Activated CD4-positive, alpha-beta memory T cell treated with anti-CD3 and anti-CD28 coated beads for 36 hours (primary cell): ENCODE measurements at regions of chr12 and their contacts with region 1.

Region 1: GRCh38 chr12:49188914-49189367 is at the start of gene TUBA1A:
- DNase-seq: peak; percentile 97
- H3K4me3 Mint-ChIP-seq: peak within 1 kb of the TSS; percentile 90
- H3K27ac Mint-ChIP-seq: peak within 1 kb of the TSS; percentile 95
- H3K4me1 Mint-ChIP-seq: peaks cover 16% of the 10 kb centered on the region
- H3K27me3 Mint-ChIP-seq: no peaks in the 10 kb centered on the region
- total RNA-seq, gene TUBA1A: 86.4 to 88.7 TPM

Region 2: GRCh38 chr12:48826209-48826894 is 362.6 kb before region 1 on chr12:
- CTCF ChIA-PET with region 1: no interaction called
- POLR2A ChIA-PET with region 1: no interaction called
- intact Hi-C with region 1: no loop called
- DNase-seq: no peak
- H3K4me3 Mint-ChIP-seq: no peak overlapping the region
- H3K27ac Mint-ChIP-seq: no peak overlapping the region
- H3K4me1 Mint-ChIP-seq: peaks cover 10% of the 10 kb centered on the region
- H3K27me3 Mint-ChIP-seq: no peaks in the 10 kb centered on the region

Region 3: DNA sequence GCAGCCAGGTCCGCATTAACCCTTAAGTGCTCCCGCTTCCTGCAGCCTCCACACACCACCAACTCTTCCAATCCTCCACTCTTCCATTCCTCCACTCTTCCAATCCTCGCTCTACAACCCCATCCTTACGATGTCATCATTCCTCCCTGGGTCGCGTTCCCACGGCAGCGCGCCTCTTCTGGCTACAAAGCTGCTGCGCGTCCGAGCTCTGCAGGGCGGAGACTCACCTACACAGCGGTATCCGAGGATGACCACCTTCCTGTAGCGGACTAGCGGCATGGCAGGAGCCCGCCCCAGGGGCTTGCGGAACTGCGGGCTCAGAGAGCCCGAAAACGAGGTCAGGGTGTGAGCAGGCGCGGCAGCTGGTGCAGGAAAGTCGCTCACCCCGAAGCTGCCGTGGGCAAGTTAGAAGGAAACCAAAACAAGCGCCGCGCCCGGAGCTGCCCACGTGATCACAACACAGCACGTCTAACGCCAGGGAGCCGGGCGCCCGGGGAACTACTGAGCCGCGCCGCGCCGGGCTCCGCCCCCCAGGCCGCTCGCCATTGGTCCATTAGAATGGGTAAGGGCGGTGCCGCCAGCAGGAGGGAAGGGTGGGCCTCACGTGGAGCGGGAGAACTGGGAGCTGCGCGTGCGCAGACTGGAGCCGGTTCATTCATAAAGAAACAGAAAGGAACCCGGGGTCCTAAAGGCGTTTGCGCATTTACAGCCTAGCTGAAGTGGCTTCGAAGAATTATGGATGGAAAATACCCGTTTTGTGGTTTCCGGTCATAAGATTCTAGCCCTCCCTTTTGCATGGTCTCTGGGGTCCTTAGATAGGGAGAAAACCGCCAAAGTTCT is 119.2 kb before region 1 on chr12 and contains the start of gene RHEBL1:
- CTCF ChIA-PET with region 1: no interaction called
- POLR2A ChIA-PET with region 1: interaction called, 19 read pairs
- intact Hi-C with region 1: no loop called
- DNase-seq: peak; percentile 100
- H3K4me3 Mint-ChIP-seq: peak within 1 kb of the TSS; percentile 98
- H3K27ac Mint-ChIP-seq: peak within 1 kb of the TSS; percentile 90
- H3K4me1 Mint-ChIP-seq: peaks cover 12% of the 10 kb centered on the region
- H3K27me3 Mint-ChIP-seq: no peaks in the 10 kb centered on the region
- total RNA-seq, gene RHEBL1: 15.6 to 16.1 TPM

Region 4: GRCh38 chr12:49130151-49131050 is 58.5 kb before region 1 on chr12:
- CTCF ChIA-PET with region 1: interaction called, 30 read pairs
- POLR2A ChIA-PET with region 1: interaction called, 71 read pairs
- intact Hi-C with region 1: loop called (anchors 1 kb)
- DNase-seq: peak; percentile 96
- H3K4me3 Mint-ChIP-seq: peak overlapping the region; percentile 97
- H3K27ac Mint-ChIP-seq: peak overlapping the region; percentile 99
- H3K4me1 Mint-ChIP-seq: peaks cover 46% of the 10 kb centered on the region
- H3K27me3 Mint-ChIP-seq: peaks cover 7% of the 10 kb centered on the region

Region 5: DNA sequence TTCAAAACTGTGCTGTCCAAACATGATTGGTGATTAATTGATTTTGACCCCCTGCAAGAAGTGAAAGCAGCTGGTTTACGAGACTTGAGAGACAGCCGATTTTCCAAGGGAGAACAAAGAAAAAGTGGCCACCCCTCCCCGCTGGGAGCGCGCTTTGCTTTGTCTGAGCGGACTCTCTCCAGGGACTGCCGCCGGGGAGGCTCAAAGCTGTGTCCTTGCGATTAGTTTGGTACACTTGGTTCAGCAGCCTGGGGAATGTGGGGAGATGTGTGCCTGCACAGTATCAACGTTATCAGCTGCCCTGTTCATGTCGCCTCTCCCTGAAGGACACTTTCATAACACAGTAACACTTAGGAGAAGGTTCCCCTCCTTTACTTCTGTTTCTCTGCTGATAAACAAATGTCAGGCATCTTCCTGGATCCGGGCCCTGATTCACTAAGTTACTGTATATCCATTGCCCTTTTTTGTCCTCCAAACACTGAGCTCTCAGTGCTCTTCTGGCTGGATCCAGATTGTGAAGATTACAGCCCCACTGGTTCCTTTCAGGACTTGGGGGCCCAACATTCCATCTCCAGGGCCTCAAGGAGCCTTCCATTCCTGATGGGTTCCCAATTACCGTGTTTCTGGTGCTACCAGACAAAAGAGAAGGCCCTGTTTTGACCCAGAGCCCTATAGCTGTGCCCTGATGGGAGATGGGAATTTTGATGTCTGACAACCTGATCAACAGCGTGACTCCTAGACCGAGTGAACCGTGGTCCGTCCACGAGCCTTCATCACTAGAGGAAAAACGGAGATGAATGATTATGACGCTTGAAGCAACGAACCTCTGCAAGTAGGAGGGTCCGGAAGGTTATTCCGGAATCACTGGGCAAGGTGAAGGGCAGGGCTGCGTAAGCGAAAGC is 44.2 kb after region 1 on chr12:
- CTCF ChIA-PET with region 1: interaction called, 10 read pairs
- POLR2A ChIA-PET with region 1: interaction called, 21 read pairs
- intact Hi-C with region 1: loop called (anchors 1 kb)
- DNase-seq: no peak
- H3K4me3 Mint-ChIP-seq: no peak overlapping the region
- H3K27ac Mint-ChIP-seq: no peak overlapping the region
- H3K4me1 Mint-ChIP-seq: peaks cover 16% of the 10 kb centered on the region
- H3K27me3 Mint-ChIP-seq: no peaks in the 10 kb centered on the region

Region 6: DNA sequence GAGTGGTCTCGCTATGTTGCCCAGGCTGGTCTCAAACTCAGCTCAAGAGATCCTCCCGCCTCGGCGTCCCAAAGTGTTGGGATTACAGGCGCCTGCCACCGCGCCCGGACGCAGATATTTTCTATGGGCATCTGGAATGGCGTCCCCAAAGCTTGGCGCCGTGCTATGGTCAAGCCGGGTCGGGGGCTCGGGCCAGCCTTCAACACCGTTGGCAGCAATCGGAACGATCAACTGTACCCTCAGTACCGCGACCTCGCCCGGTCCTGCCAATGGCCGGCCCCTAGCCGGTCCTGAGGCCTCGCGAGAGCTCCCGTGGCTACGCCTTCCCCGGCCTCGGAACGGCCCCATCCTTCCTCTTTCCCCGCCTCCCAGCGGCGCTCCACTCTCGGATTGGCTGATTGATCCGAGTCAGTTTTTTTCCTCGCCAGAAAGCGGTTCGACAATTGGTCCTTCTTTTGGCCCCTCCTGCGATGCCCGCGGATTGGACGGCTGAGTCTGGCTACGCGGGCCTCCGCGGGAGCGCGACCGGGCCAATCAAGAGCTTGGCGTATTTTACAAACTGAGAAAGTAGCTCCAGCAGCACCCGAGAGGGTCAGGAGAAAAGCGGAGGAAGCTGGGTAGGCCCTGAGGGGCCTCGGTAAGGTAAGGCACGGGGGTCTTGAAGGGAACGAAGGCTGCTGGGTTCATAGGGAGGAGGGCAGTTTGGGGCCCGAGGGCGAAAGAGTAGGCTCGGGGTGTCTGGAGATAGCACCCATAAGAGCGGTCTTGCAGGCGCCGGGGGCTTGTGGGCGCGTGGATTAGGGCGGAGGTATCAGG is 134.0 kb after region 1 on chr12 and contains the start of gene TROAP:
- CTCF ChIA-PET with region 1: interaction called, 3 read pairs
- POLR2A ChIA-PET with region 1: no interaction called
- intact Hi-C with region 1: loop called (anchors 1 kb)
- DNase-seq: peak; percentile 99
- H3K4me3 Mint-ChIP-seq: peak within 1 kb of the TSS; percentile 99
- H3K27ac Mint-ChIP-seq: peak within 1 kb of the TSS; percentile 90
- H3K4me1 Mint-ChIP-seq: peaks cover 19% of the 10 kb centered on the region
- H3K27me3 Mint-ChIP-seq: no peaks in the 10 kb centered on the region
- total RNA-seq, gene TROAP: 57.7 to 64.9 TPM